ENCODE measurements at regions of chr21 and their contacts with region 1.

Region 1: GRCh38 chr21:25607151-25608043 is at the start of gene MRPL39:
- DNase-seq: peak; percentile 25 to 89
- H3K4me3 ChIP-seq: peak within 1 kb of the TSS; percentile 78 to 94
- H3K27ac ChIP-seq: peak within 1 kb of the TSS; percentile 71 to 89
- H3K4me1 ChIP-seq: peaks cover 0 to 14% of the 10 kb centered on the region in 2 donors
- H3K27me3 ChIP-seq: no peaks in the 10 kb centered on the region
- CTCF ChIP-seq: peak; percentile 42 to 46 (median 45)
- total RNA-seq, gene MRPL39: 26.1 TPM

Region 2: GRCh38 chr21:25539606-25540005 is 67.8 kb before region 1 on chr21:
- intact Hi-C with region 1: no loop called
- DNase-seq: no peak
- H3K4me3 ChIP-seq: no peak overlapping the region
- H3K27ac ChIP-seq: no peak overlapping the region
- H3K4me1 ChIP-seq: no peaks in the 10 kb centered on the region
- H3K27me3 ChIP-seq: no peaks in the 10 kb centered on the region
- CTCF ChIP-seq: no peak

Region 3: DNA sequence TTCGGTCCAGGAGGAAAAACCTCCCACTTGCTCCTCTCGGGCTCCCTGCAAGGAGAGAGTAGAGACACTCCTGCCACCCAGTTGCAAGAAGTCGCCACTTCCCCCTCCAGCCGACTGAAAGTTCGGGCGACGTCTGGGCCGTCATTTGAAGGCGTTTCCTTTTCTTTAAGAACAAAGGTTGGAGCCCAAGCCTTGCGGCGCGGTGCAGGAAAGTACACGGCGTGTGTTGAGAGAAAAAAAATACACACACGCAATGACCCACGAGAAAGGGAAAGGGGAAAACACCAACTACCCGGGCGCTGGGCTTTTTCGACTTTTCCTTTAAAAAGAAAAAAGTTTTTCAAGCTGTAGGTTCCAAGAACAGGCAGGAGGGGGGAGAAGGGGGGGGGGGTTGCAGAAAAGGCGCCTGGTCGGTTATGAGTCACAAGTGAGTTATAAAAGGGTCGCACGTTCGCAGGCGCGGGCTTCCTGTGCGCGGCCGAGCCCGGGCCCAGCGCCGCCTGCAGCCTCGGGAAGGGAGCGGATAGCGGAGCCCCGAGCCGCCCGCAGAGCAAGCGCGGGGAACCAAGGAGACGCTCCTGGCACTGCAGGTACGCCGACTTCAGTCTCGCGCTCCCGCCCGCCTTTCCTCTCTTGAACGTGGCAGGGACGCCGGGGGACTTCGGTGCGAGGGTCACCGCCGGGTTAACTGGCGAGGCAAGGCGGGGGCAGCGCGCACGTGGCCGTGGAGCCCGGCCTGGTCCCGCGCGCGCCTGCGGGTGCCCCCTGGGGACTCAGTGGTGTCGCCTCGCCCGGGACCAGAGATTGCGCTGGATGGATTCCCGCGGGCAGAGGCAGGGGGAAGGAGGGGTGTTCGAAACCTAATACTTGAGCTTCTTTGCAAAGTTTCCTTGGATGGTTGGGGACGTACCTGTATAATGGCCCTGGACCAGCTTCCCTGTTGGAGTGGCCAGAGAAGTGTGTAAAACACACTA is 45.4 kb before region 1 on chr21:
- intact Hi-C with region 1: loop called (anchors 5 kb)
- DNase-seq: peak; percentile 36 to 83
- H3K4me3 ChIP-seq: peak overlapping the region; percentile 65 to 86
- H3K27ac ChIP-seq: peak overlapping the region; percentile 83 to 91
- H3K4me1 ChIP-seq: peaks cover 0 to 3% of the 10 kb centered on the region in 2 donors
- H3K27me3 ChIP-seq: no peaks in the 10 kb centered on the region
- CTCF ChIP-seq: peak in 2 of 3 experiments; percentile 20 to 35

Region 4: GRCh38 chr21:25639551-25640201 is 32.3 kb after region 1 on chr21:
- intact Hi-C with region 1: loop called (anchors 1 kb)
- DNase-seq: peak in 1 of 2 donors; percentile 67
- H3K4me3 ChIP-seq: peak overlapping the region; percentile 75 to 82
- H3K27ac ChIP-seq: peak overlapping the region; percentile 66 to 77
- H3K4me1 ChIP-seq: peaks cover 0 to 6% of the 10 kb centered on the region in 2 donors
- H3K27me3 ChIP-seq: no peaks in the 10 kb centered on the region
- CTCF ChIP-seq: peak; percentile 12 to 45 (median 42)

Region 5: DNA sequence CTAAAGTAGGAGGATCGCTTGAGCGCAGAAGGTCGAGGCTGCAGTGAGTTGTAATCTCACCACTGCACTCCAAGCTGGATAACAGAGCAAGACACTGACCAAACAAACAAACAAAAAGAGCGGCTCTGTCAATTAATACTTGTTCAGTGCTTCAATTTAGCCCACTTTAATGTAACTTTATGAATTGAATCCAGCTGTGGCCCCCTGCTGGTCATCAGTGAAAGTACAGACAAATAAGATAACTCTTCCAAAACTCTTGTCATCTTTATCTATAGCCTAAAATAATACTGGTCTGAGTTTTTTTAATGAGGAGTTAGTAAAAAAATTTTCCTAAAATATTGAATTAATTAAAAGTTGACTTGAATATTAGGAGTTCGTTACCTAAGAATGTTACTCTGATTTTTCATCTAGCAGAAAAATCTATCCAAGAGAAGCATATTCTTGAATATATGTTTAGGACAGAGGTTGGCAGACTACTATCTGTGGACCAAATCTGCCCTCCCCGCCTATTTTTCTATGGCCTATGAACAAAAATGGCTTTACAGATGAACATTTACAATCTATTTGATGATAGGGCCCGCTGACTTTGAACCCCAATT is 101.2 kb after region 1 on chr21:
- intact Hi-C with region 1: loop called (anchors 1 kb)
- DNase-seq: peak in 1 of 2 donors; percentile 66
- H3K4me3 ChIP-seq: no peak overlapping the region
- H3K27ac ChIP-seq: no peak overlapping the region
- H3K4me1 ChIP-seq: no peaks in the 10 kb centered on the region
- H3K27me3 ChIP-seq: no peaks in the 10 kb centered on the region
- CTCF ChIP-seq: peak; percentile 55 to 79 (median 76)

Region 6: GRCh38 chr21:25734904-25735645 is 127.7 kb after region 1 on chr21 and contains the starts of genes ATP5PF and GABPA:
- intact Hi-C with region 1: loop called (anchors 10 kb)
- DNase-seq: peak; percentile 92 to 99
- H3K4me3 ChIP-seq: peak within 1 kb of the TSS; percentile 82 to 85
- H3K27ac ChIP-seq: peak within 1 kb of the TSS; percentile 98 to 99
- H3K4me1 ChIP-seq: peaks cover 0 to 24% of the 10 kb centered on the region in 2 donors
- H3K27me3 ChIP-seq: no peaks in the 10 kb centered on the region
- CTCF ChIP-seq: peak in 1 of 3 experiments; percentile 12
- total RNA-seq, gene ATP5PF: 81.8 TPM
- total RNA-seq, gene GABPA: 8.9 TPM

Measured in ascending aorta (tissue), 2 donors.